HCT116 (cell line): ENCODE measurements at regions of chr7 and their contacts with region 1.

Region 1: GRCh38 chr7:109154748-109155147 is 585.1 kb downstream of the DNAJB9 start:
- DNase-seq: no peak
- ATAC-seq: no peak
- H3K4me3 ChIP-seq: no peak overlapping the region
- H3K27ac ChIP-seq: no peak overlapping the region
- H3K4me1 ChIP-seq: no peaks in the 10 kb centered on the region
- H3K27me3 ChIP-seq: no peaks in the 10 kb centered on the region
- CTCF ChIP-seq: no peak
- POLR2A ChIP-seq: no peak
- RAD21 ChIP-seq: no peak

Region 2: GRCh38 chr7:109133104-109133503 is 21.6 kb before region 1 on chr7:
- CTCF ChIA-PET with region 1: no interaction called
- POLR2A ChIA-PET with region 1: no interaction called
- RAD21 ChIA-PET with region 1: no interaction called
- intact Hi-C with region 1: loop called (anchors 2 kb)
- DNase-seq: no peak
- ATAC-seq: no peak
- H3K4me3 ChIP-seq: no peak overlapping the region
- H3K27ac ChIP-seq: no peak overlapping the region
- H3K4me1 ChIP-seq: no peaks in the 10 kb centered on the region
- H3K27me3 ChIP-seq: no peaks in the 10 kb centered on the region
- CTCF ChIP-seq: no peak
- POLR2A ChIP-seq: no peak
- RAD21 ChIP-seq: no peak

Region 3: GRCh38 chr7:109213081-109213480 is 58.3 kb after region 1 on chr7:
- CTCF ChIA-PET with region 1: no interaction called
- POLR2A ChIA-PET with region 1: no interaction called
- RAD21 ChIA-PET with region 1: no interaction called
- intact Hi-C with region 1: no loop called
- DNase-seq: no peak
- ATAC-seq: no peak
- H3K4me3 ChIP-seq: no peak overlapping the region
- H3K27ac ChIP-seq: no peak overlapping the region
- H3K4me1 ChIP-seq: no peaks in the 10 kb centered on the region
- H3K27me3 ChIP-seq: no peaks in the 10 kb centered on the region
- CTCF ChIP-seq: no peak
- POLR2A ChIP-seq: no peak
- RAD21 ChIP-seq: no peak